WTC11 (cell line): ENCODE measurements at regions of chr11 and their contacts with region 1.

Region 1: GRCh38 chr11:67239783-67240575 is 26.3 kb upstream of the GRK2 start:
- DNase-seq: peak; percentile 98
- ATAC-seq: peak; percentile 98
- H3K4me3 Mint-ChIP-seq: peak overlapping the region; percentile 96
- H3K27ac Mint-ChIP-seq: peak overlapping the region; percentile 98
- H3K4me1 Mint-ChIP-seq: peaks cover 35% of the 10 kb centered on the region
- H3K27me3 Mint-ChIP-seq: no peaks in the 10 kb centered on the region
- CTCF ChIP-seq: no peak

Region 2: GRCh38 chr11:67118801-67119584 is 121.0 kb before region 1 on chr11 and contains the start of gene KDM2A:
- CTCF ChIA-PET with region 1: interaction called, 13 read pairs
- POLR2A ChIA-PET with region 1: interaction called, 11 read pairs
- DNase-seq: peak; percentile 98
- ATAC-seq: peak; percentile 83
- H3K4me3 Mint-ChIP-seq: peak within 1 kb of the TSS; percentile 94
- H3K27ac Mint-ChIP-seq: peak within 1 kb of the TSS; percentile 96
- H3K4me1 Mint-ChIP-seq: peaks cover 32% of the 10 kb centered on the region
- H3K27me3 Mint-ChIP-seq: peaks cover 4% of the 10 kb centered on the region; the same call in 1 of the 2 replicates
- CTCF ChIP-seq: no peak
- total RNA-seq, gene KDM2A: 54.0 to 58.0 TPM (median 54.3 TPM) in 3 replicates

Region 3: DNA sequence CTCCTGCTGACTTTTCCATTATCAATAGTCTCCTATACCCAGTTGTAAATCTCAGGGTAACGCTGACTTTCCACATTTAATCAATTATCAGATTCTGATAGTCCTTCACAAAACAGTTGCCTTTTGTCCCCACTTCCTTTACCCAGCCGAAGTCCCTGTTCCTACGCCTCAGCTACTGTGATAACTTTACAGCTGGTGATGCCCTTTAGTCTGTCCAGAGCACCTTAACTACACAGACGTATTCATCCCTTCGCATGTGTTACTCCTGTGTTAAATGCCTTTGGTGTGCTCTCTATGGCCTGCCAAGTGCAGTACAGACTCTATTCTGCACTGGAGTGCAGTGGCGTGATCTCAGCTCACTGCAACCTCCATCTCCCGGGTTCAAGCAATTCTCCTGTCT is 83.5 kb after region 1 on chr11:
- CTCF ChIA-PET with region 1: no interaction called
- POLR2A ChIA-PET with region 1: no interaction called
- DNase-seq: no peak
- ATAC-seq: no peak
- H3K4me3 Mint-ChIP-seq: no peak overlapping the region
- H3K27ac Mint-ChIP-seq: no peak overlapping the region
- H3K4me1 Mint-ChIP-seq: peaks cover 2% of the 10 kb centered on the region
- H3K27me3 Mint-ChIP-seq: peaks cover 20% of the 10 kb centered on the region
- CTCF ChIP-seq: no peak